PC-9 (cell line): ENCODE measurements at regions of chr6 and their contacts with region 1.

Region 1: GRCh38 chr6:107304421-107305025 is 154.8 kb downstream of the PDSS2 start:
- DNase-seq: peak; percentile 63 to 92
- H3K4me3 ChIP-seq: no peak overlapping the region
- H3K27ac ChIP-seq: peak overlapping the region; percentile 55
- H3K4me1 ChIP-seq: peaks cover 19% of the 10 kb centered on the region
- H3K27me3 ChIP-seq: no peaks in the 10 kb centered on the region
- CTCF ChIP-seq: no peak

Region 2: DNA sequence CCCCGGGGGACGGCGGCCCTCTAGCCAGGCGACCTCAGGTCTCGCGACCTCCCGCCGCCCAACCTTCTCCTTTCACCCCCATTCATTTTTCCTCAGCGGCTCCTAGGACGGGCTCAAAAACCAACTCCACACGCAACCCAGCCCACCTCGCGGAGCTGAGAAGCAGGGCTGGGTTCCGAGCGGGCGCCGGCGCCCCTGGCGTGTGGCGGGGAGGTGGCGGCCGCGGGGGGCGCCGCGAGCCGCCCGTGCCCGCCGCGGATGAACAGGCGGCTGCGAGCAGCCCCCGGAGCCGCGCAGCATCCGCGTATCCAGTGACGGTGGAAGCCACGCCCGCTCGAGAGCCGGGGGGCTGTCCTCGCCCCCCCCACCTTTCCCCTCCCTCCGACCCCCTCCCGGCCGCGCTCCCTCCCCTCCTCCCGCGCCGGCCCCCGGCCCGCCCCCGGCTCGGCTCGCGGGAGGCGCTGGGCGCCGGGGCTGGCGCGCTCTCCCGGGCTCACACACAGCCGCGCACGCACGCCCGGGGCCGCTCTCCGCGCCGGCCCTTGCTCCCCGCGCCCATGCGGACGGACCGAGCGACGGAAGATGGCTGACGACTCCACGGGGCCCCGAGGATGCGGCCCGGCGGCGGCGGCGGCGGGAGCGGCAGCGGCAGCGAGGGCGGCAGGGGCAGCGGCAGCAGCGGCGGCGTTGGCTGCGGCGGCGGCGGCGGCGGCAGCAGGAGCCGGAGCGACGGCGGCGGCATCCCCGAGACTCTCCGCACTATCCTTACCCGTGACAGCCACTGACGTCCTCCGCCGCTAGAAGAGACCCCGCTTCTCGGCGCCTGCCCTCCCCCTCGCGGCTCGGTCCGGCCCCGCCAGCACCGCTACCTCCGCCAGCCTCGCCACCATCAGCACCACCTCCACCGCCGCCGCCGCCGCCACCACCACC is 185.4 kb after region 1 on chr6 and contains the start of gene SOBP:
- CTCF ChIA-PET with region 1: no interaction called
- POLR2A ChIA-PET with region 1: interaction called, 17 read pairs
- intact Hi-C with region 1: no loop called
- DNase-seq: peak in 1 of 2 experiments; percentile 12
- H3K4me3 ChIP-seq: peak within 1 kb of the TSS; percentile 58
- H3K27ac ChIP-seq: no peak within 1 kb of the TSS
- H3K4me1 ChIP-seq: peaks cover 5% of the 10 kb centered on the region; the same call in 1 of the 2 replicates
- H3K27me3 ChIP-seq: peaks cover 35% of the 10 kb centered on the region
- CTCF ChIP-seq: no peak
- total RNA-seq, gene SOBP: 0.22 TPM in 1 of 2 replicates, not detected in the other